B cell (primary cell): ENCODE measurements at regions of chr16 and their contacts with region 1.

Region 1: GRCh38 chr16:53054670-53055485 is at the start of gene CHD9:
- DNase-seq: peak; percentile 91
- ATAC-seq: peak; percentile 87
- H3K4me3 ChIP-seq: peak within 1 kb of the TSS; percentile 49 to 83 (median 78)
- H3K4me3 Mint-ChIP-seq: peak within 1 kb of the TSS; percentile 98
- H3K27ac ChIP-seq: peak within 1 kb of the TSS; percentile 65 to 82
- H3K27ac Mint-ChIP-seq: peak within 1 kb of the TSS; percentile 97
- H3K4me1 ChIP-seq: peaks cover 35 to 53% of the 10 kb centered on the region in 2 donors
- H3K4me1 Mint-ChIP-seq: peaks cover 43% of the 10 kb centered on the region
- H3K27me3 ChIP-seq: no peaks in the 10 kb centered on the region
- H3K27me3 Mint-ChIP-seq: no peaks in the 10 kb centered on the region
- CTCF ChIP-seq: peak; percentile 99
- total RNA-seq, gene CHD9: 97.5 and 102 TPM in 2 replicates

Region 2: GRCh38 chr16:53068423-53068833 is 13.6 kb after region 1 on chr16:
- CTCF ChIA-PET with region 1: interaction called, 25 read pairs
- POLR2A ChIA-PET with region 1: no interaction called
- intact Hi-C with region 1: loop called (anchors 1 kb)
- DNase-seq: peak; percentile 64
- ATAC-seq: peak; percentile 74
- H3K4me3 ChIP-seq: peak overlapping the region in 3 of 5 experiments; percentile 3 to 55 (median 22)
- H3K4me3 Mint-ChIP-seq: peak overlapping the region; percentile 59
- H3K27ac ChIP-seq: peak overlapping the region; percentile 52 to 78
- H3K27ac Mint-ChIP-seq: peak overlapping the region; percentile 82
- H3K4me1 ChIP-seq: peaks cover 76 to 91% of the 10 kb centered on the region in 2 donors
- H3K4me1 Mint-ChIP-seq: peaks cover 81% of the 10 kb centered on the region
- H3K27me3 ChIP-seq: no peaks in the 10 kb centered on the region
- H3K27me3 Mint-ChIP-seq: no peaks in the 10 kb centered on the region
- CTCF ChIP-seq: no peak

Region 3: DNA sequence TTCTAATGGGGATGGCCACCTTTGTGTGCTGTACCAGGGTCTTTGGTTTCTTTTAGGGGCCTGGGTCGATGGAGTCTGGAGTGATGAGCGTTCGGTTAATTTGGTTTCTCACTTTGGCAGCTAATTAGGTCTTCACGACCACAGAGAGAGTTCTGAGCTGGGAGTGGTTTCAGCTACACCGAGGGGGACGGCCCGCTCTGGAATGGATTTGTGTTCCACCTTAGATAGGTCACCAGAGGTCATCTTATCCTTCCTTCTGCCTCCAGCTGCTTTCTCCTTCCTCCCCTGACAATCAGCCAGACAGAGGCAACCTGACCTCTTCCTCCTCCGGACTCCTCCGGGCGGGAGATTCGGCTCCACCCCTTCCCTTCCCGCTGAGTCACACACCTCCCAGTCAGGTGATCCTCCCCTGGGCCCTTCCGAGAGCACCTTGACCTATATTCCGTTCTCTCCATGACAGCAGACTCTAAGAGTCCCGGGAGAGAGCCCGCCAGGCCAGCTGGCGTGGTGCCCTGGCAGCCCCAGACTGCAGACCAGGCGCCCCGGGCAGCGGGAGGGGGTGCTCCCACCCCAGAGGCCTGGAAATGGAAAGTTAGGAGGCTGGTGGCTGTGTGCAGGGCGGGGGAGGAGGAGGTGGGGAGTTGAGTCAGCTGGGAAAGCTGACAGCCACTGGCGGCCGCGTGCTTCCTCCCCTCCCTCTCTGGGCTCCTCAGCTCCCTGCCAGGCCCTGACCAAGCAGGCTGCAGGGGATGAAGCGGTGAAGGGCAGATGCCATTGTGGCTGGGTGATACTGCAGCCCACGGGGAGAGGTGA is 44.6 kb after region 1 on chr16:
- CTCF ChIA-PET with region 1: interaction called, 59 read pairs
- POLR2A ChIA-PET with region 1: interaction called, 15 read pairs
- intact Hi-C with region 1: loop called (anchors 2 kb)
- DNase-seq: no peak
- ATAC-seq: peak; percentile 35
- H3K4me3 ChIP-seq: peak overlapping the region; percentile 39 to 71 (median 65)
- H3K4me3 Mint-ChIP-seq: peak overlapping the region; percentile 82
- H3K27ac ChIP-seq: peak overlapping the region; percentile 95 to 97
- H3K27ac Mint-ChIP-seq: peak overlapping the region; percentile 91
- H3K4me1 ChIP-seq: peaks cover 40 to 60% of the 10 kb centered on the region in 2 donors
- H3K4me1 Mint-ChIP-seq: peaks cover 68% of the 10 kb centered on the region
- H3K27me3 ChIP-seq: no peaks in the 10 kb centered on the region
- H3K27me3 Mint-ChIP-seq: no peaks in the 10 kb centered on the region
- CTCF ChIP-seq: no peak

Region 4: DNA sequence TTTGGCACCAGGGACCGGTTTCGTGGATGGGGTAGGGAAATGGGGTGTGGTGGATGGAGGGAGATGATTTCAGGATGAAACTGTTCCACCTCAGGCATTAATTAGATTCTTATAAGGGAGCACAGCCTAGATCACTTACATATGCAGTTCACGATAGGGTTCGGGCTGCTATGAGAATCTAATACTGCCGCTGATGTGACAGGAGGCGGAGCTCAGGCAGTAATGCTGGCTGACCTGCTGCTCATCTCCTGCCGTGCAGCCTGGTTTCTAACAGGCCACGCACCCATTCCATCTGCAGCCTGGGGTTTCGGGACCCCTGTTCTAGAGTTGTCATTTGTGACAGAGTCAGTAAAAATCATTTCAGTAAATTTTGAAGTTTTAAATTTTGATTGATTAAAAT is 99.6 kb after region 1 on chr16:
- CTCF ChIA-PET with region 1: interaction called, 111 read pairs
- POLR2A ChIA-PET with region 1: no interaction called
- intact Hi-C with region 1: no loop called
- DNase-seq: no peak
- ATAC-seq: no peak
- H3K4me3 ChIP-seq: no peak overlapping the region
- H3K4me3 Mint-ChIP-seq: no peak overlapping the region
- H3K27ac ChIP-seq: no peak overlapping the region
- H3K27ac Mint-ChIP-seq: peak overlapping the region; percentile 37
- H3K4me1 ChIP-seq: peaks cover 4 to 6% of the 10 kb centered on the region in 2 donors
- H3K4me1 Mint-ChIP-seq: no peaks in the 10 kb centered on the region
- H3K27me3 ChIP-seq: no peaks in the 10 kb centered on the region
- H3K27me3 Mint-ChIP-seq: no peaks in the 10 kb centered on the region
- CTCF ChIP-seq: no peak

Region 5: GRCh38 chr16:53207810-53208752 is 153.2 kb after region 1 on chr16:
- CTCF ChIA-PET with region 1: interaction called, 40 read pairs
- POLR2A ChIA-PET with region 1: no interaction called
- intact Hi-C with region 1: loop called (anchors 1 kb)
- DNase-seq: peak; percentile 70
- ATAC-seq: peak; percentile 74
- H3K4me3 ChIP-seq: peak overlapping the region; percentile 29 to 85 (median 54)
- H3K4me3 Mint-ChIP-seq: peak overlapping the region; percentile 86
- H3K27ac ChIP-seq: peak overlapping the region; percentile 66 to 78
- H3K27ac Mint-ChIP-seq: peak overlapping the region; percentile 94
- H3K4me1 ChIP-seq: peaks cover 21 to 33% of the 10 kb centered on the region in 2 donors
- H3K4me1 Mint-ChIP-seq: peaks cover 36% of the 10 kb centered on the region
- H3K27me3 ChIP-seq: no peaks in the 10 kb centered on the region
- H3K27me3 Mint-ChIP-seq: no peaks in the 10 kb centered on the region
- CTCF ChIP-seq: peak; percentile 82

Region 6: GRCh38 chr16:53435066-53435688 is 380.3 kb after region 1 on chr16:
- CTCF ChIA-PET with region 1: no interaction called
- POLR2A ChIA-PET with region 1: no interaction called
- intact Hi-C with region 1: loop called (anchors 1 kb)
- DNase-seq: peak; percentile 84
- ATAC-seq: peak; percentile 75
- H3K4me3 ChIP-seq: peak overlapping the region; percentile 76 to 99 (median 98)
- H3K4me3 Mint-ChIP-seq: peak overlapping the region; percentile 93
- H3K27ac ChIP-seq: peak overlapping the region; percentile 83 to 90
- H3K27ac Mint-ChIP-seq: peak overlapping the region; percentile 95
- H3K4me1 ChIP-seq: peaks cover 15 to 16% of the 10 kb centered on the region in 2 donors
- H3K4me1 Mint-ChIP-seq: peaks cover 27% of the 10 kb centered on the region
- H3K27me3 ChIP-seq: peaks cover 0 to under 1% (median 0%) of the 10 kb centered on the region in 4 experiments
- H3K27me3 Mint-ChIP-seq: peaks cover 2% of the 10 kb centered on the region
- CTCF ChIP-seq: no peak

Region 7: DNA sequence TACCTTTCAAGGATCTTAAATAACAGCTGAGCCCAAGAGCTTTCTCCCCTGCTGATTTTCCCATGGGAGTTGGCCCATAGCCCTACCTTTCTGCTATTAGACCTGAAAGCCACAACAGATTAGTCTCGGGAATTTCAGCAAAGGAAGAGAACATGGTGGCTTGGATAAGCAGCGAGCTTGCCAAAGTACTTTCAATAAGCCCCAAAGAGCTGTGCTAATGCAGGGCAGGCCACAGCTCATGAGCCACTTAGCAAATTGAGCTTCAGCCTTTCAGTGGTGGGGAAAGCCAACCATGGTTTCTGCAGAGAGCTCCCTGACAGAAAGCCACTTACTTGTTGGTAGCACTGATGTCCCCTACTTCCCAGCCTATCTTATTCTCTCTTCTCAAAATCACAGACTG is 1658.0 kb after region 1 on chr16:
- CTCF ChIA-PET with region 1: no interaction called
- POLR2A ChIA-PET with region 1: no interaction called
- intact Hi-C with region 1: no loop called
- DNase-seq: no peak
- ATAC-seq: no peak
- H3K4me3 ChIP-seq: no peak overlapping the region
- H3K4me3 Mint-ChIP-seq: no peak overlapping the region
- H3K27ac ChIP-seq: no peak overlapping the region
- H3K27ac Mint-ChIP-seq: no peak overlapping the region
- H3K4me1 ChIP-seq: no peaks in the 10 kb centered on the region
- H3K4me1 Mint-ChIP-seq: no peaks in the 10 kb centered on the region
- H3K27me3 ChIP-seq: no peaks in the 10 kb centered on the region
- H3K27me3 Mint-ChIP-seq: no peaks in the 10 kb centered on the region
- CTCF ChIP-seq: no peak